ENCODE measurements at regions of chr18 and their contacts with region 1.

Region 1: GRCh38 chr18:23131693-23132319 is 3.5 kb upstream of the CABLES1 start:
- DNase-seq: peak; percentile 84
- ATAC-seq: peak; percentile 34
- H3K4me3 ChIP-seq: no peak overlapping the region
- H3K27ac ChIP-seq: no peak overlapping the region
- H3K4me1 ChIP-seq: peaks cover 4% of the 10 kb centered on the region; the same call in 1 of the 2 replicates
- H3K27me3 ChIP-seq: no peaks in the 10 kb centered on the region
- CTCF ChIP-seq: peak; percentile 79
- POLR2A ChIP-seq: no peak
- RAD21 ChIP-seq: peak; percentile 85

Region 2: DNA sequence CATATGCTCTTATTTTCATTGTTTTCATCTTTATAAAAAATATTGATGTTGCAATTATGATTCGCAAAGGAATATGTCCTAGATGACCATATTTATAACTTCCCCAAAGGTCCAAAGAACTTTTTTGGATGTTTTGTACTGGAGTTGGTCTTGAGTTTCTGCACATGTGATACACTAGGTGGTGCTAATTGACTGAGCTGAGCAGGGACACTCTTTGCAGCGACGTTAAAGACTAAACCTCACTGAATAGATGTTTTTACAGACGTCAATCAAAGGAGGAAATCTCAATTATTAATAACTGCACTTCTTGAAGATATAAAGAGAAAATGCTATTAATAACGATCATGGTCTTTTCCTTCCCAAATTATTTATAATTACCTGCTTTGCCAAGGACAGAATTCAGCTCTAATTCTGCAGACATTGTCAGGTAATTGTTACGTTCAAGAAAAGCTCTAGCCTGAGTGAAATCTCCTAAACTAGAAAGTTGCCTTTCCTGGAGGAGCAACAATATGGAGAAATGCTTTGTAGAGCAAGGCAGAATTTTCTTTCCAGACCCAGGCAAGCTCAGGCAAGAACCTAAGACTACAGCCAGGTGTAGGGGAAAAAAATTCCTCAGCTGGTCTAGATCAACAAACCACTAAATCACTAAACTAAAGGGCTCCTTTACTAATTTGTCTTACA is 318.0 kb before region 1 on chr18:
- CTCF ChIA-PET with region 1: no interaction called
- POLR2A ChIA-PET with region 1: no interaction called
- dilution Hi-C with region 1: no loop called
- in situ Hi-C with region 1: no loop called
- intact Hi-C with region 1: loop called (anchors 1 kb)
- DNase-seq: peak; percentile 65
- ATAC-seq: peak; percentile 86
- H3K4me3 ChIP-seq: no peak overlapping the region
- H3K27ac ChIP-seq: no peak overlapping the region
- H3K4me1 ChIP-seq: no peaks in the 10 kb centered on the region
- H3K27me3 ChIP-seq: no peaks in the 10 kb centered on the region
- CTCF ChIP-seq: peak; percentile 85
- POLR2A ChIP-seq: peak; percentile 52; the same call in 1 of the 2 replicates
- RAD21 ChIP-seq: peak; percentile 96

Region 3: GRCh38 chr18:22983175-22983574 is 148.6 kb before region 1 on chr18:
- CTCF ChIA-PET with region 1: no interaction called
- POLR2A ChIA-PET with region 1: no interaction called
- dilution Hi-C with region 1: no loop called
- in situ Hi-C with region 1: no loop called
- intact Hi-C with region 1: no loop called
- DNase-seq: peak; percentile 64
- ATAC-seq: peak; percentile 59
- H3K4me3 ChIP-seq: no peak overlapping the region
- H3K27ac ChIP-seq: no peak overlapping the region
- H3K4me1 ChIP-seq: peaks cover under 1% of the 10 kb centered on the region; the same call in 1 of the 2 replicates
- H3K27me3 ChIP-seq: no peaks in the 10 kb centered on the region
- CTCF ChIP-seq: peak; percentile 66
- POLR2A ChIP-seq: no peak
- RAD21 ChIP-seq: peak; percentile 67

Region 4: GRCh38 chr18:23207191-23207955 is 75.6 kb after region 1 on chr18:
- CTCF ChIA-PET with region 1: no interaction called
- POLR2A ChIA-PET with region 1: no interaction called
- dilution Hi-C with region 1: no loop called
- in situ Hi-C with region 1: no loop called
- intact Hi-C with region 1: loop called (anchors 5 kb)
- DNase-seq: peak; percentile 68
- ATAC-seq: peak; percentile 58
- H3K4me3 ChIP-seq: no peak overlapping the region
- H3K27ac ChIP-seq: no peak overlapping the region
- H3K4me1 ChIP-seq: peaks cover 17% of the 10 kb centered on the region
- H3K27me3 ChIP-seq: no peaks in the 10 kb centered on the region
- CTCF ChIP-seq: peak; percentile 30
- POLR2A ChIP-seq: no peak
- RAD21 ChIP-seq: peak; percentile 6; the same call in 1 of the 2 replicates

Region 5: GRCh38 chr18:23356915-23357601 is 225.3 kb after region 1 on chr18:
- CTCF ChIA-PET with region 1: no interaction called
- POLR2A ChIA-PET with region 1: no interaction called
- dilution Hi-C with region 1: no loop called
- in situ Hi-C with region 1: no loop called
- intact Hi-C with region 1: loop called (anchors 1 kb)
- DNase-seq: peak; percentile 55
- ATAC-seq: peak; percentile 62
- H3K4me3 ChIP-seq: no peak overlapping the region
- H3K27ac ChIP-seq: peak overlapping the region; percentile 98; the same call in 1 of the 2 replicates
- H3K4me1 ChIP-seq: peaks cover 23% of the 10 kb centered on the region
- H3K27me3 ChIP-seq: no peaks in the 10 kb centered on the region
- CTCF ChIP-seq: no peak
- POLR2A ChIP-seq: no peak
- RAD21 ChIP-seq: no peak

Region 6: DNA sequence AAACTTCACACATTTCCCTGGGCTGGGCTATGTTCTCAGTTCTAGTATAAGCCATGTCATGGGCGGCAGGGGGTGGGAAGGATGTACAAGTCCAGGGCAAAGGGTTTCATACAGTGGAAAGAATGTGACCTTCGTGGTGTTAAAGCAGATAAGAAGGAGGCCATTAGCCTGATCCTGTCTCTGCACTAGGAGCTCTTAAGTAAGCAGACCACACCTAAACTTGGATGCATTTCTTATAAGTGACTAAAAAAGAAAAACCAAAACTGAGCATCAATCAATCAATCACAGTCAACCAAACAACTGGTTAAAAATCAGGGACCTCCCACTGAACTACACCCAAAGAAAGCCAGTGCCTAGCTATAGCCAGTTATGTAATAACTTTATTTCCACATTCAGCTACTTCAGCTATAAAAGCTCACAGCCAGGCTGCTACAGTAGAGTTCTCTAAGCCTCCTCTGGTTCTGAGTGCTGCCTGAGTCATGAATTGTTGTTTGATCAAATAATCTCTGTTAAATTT is 274.5 kb after region 1 on chr18:
- CTCF ChIA-PET with region 1: no interaction called
- POLR2A ChIA-PET with region 1: no interaction called
- dilution Hi-C with region 1: no loop called
- in situ Hi-C with region 1: loop called (anchors 5 kb)
- intact Hi-C with region 1: loop called (anchors 1 kb)
- DNase-seq: peak; percentile 40
- ATAC-seq: peak; percentile 63; the same call in 1 of the 2 replicates
- H3K4me3 ChIP-seq: no peak overlapping the region
- H3K27ac ChIP-seq: no peak overlapping the region
- H3K4me1 ChIP-seq: peaks cover 6% of the 10 kb centered on the region
- H3K27me3 ChIP-seq: no peaks in the 10 kb centered on the region
- CTCF ChIP-seq: no peak
- POLR2A ChIP-seq: no peak
- RAD21 ChIP-seq: no peak